ENCODE measurements at regions of chr14 and their contacts with region 1.

Region 1: DNA sequence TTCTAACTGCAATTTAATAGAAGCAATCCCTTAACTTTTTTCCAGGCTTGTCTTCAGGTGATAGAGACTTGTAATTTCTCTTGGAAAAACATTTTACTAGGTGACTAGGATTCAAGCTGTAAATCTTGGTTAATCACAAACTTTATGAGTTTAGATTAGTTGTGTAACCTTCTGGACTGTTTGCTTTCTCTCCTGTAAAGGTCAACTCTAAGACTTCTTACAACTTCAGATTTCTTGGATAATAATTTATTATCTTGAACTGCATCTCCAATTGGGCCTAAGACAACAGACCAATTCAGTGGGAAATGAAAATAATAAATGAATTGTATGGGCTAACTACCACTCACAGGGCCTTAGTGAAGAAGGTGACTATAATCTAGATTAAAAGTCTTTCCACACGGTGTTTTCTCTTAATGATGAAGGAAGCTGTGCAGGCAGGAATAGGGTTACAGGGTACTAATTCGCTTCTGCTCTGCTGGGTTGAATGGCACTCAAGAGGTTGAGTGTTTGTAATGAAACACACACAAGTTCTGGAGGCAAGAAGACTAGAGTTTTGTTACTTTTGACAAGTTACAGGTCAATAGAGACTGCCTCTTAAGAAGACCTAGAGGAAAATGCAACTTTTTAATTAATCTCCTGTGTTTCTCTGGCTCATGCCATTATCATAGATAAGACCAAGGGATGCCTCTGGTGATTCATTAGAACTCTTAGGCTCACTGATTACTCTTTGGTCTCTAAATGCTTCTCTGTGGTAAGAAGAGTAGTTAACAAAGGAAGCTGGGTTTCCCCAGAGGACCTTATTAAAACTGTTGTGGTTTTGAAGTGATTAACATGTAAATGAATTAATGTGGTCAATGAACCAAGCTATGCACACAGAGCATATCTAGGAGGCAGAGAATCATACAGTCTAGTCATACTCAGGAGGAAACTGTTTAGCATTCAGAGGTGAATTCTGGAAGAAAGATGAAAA is 30.0 kb upstream of the OR4E1 start:
- DNase-seq: no peak
- H3K4me3 ChIP-seq: no peak overlapping the region
- H3K4me3 Mint-ChIP-seq: no peak overlapping the region
- H3K27ac Mint-ChIP-seq: no peak overlapping the region
- H3K4me1 ChIP-seq: peaks cover 41% of the 10 kb centered on the region
- H3K4me1 Mint-ChIP-seq: peaks cover 19% of the 10 kb centered on the region
- H3K27me3 ChIP-seq: no peaks in the 10 kb centered on the region
- H3K27me3 Mint-ChIP-seq: no peaks in the 10 kb centered on the region
- CTCF ChIP-seq: no peak

Region 2: DNA sequence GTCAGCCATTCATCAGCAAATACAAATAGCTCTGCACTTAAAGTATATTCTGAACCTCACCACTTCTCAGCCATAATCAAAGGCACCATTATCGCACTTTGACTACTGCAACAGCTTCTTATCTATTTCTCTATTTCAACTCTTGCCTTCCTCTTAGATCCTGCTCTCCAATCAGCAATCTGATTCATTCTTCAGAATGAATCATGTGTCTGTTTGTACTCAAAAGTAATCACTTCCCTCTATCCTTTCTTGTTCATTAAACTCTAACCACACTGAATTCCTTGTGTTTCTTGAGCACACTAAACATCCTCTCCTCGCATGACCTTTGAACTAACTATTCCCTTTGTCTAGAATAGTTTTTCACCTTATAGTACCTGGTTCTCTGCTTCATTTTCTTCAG is 17.2 kb before region 1 on chr14:
- CTCF ChIA-PET with region 1: no interaction called
- POLR2A ChIA-PET with region 1: no interaction called
- intact Hi-C with region 1: loop called (anchors 2 kb)
- DNase-seq: no peak
- H3K4me3 ChIP-seq: no peak overlapping the region
- H3K4me3 Mint-ChIP-seq: peak overlapping the region; percentile 18
- H3K27ac Mint-ChIP-seq: peak overlapping the region; percentile 23
- H3K4me1 ChIP-seq: peaks cover 22% of the 10 kb centered on the region
- H3K4me1 Mint-ChIP-seq: peaks cover 24% of the 10 kb centered on the region
- H3K27me3 ChIP-seq: no peaks in the 10 kb centered on the region
- H3K27me3 Mint-ChIP-seq: no peaks in the 10 kb centered on the region
- CTCF ChIP-seq: no peak

Measured in Caco-2 (cell line).